Right ventricle myocardium inferior (tissue), 1 donor: ENCODE measurements at regions of chr3 and their contacts with region 1.

Region 1: GRCh38 chr3:147119989-147120388 is 286.4 kb downstream of the ZIC4 start:
- DNase-seq: no peak
- ATAC-seq: no peak

Region 2: GRCh38 chr3:148084931-148085330 is 964.9 kb after region 1 on chr3:
- intact Hi-C with region 1: loop called (anchors 5 kb)
- DNase-seq: no peak
- ATAC-seq: no peak